B cell (primary cell): ENCODE measurements at regions of chr19 and their contacts with region 1.

Region 1: DNA sequence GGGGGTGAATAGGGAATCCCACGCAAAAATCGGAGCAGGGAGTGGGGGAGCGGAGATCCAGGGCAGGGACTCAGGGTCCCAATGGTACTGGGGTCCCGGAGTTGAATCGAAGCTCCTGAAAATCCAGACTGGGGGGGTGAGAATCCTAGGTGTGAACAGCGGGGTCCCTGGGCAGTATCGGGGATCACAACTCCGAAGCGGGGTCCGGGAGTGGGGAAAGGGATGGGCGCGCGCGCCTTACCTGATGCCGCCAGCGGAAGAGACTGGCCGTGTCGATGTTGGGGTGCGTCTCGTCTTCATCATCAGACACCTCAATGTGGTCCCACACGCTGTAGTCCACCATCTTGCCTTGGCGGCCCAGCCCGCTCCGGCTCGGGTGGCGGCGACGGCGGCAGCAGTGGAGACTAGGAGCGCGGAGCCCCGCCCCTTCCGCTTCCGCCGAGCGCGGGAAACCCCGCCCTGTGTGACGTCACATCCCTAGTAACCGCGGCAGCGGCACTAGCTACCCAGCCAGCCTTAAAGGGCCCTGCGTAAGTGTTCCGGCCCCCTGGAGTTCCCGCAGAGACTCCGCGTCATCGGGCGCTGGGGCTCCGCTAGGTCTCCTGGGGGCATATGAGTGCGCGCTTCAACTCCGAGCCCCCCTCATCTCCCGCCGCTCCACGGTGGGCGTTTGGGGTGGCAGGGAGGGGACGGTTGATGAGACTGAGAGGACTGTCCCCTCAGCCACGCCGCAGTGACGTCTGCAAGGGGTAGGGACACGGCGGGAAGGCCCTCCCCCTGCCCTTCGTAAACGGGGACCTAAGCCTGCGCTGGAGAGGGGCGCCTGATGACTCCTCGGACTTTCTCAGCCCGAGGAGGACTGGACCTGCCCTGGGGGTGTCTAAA is at the start of gene CDC37:
- DNase-seq: peak; percentile 99
- ATAC-seq: peak; percentile 78
- H3K4me3 ChIP-seq: peak within 1 kb of the TSS; percentile 87 to 98 (median 93)
- H3K4me3 Mint-ChIP-seq: peak within 1 kb of the TSS; percentile 94
- H3K27ac ChIP-seq: peak within 1 kb of the TSS; percentile 83 to 93
- H3K27ac Mint-ChIP-seq: peak within 1 kb of the TSS; percentile 91
- H3K4me1 ChIP-seq: peaks cover 49 to 86% of the 10 kb centered on the region in 2 donors
- H3K4me1 Mint-ChIP-seq: peaks cover 68% of the 10 kb centered on the region
- H3K27me3 ChIP-seq: no peaks in the 10 kb centered on the region
- H3K27me3 Mint-ChIP-seq: no peaks in the 10 kb centered on the region
- CTCF ChIP-seq: no peak
- total RNA-seq, gene CDC37: 178 and 193 TPM in 2 replicates

Region 2: DNA sequence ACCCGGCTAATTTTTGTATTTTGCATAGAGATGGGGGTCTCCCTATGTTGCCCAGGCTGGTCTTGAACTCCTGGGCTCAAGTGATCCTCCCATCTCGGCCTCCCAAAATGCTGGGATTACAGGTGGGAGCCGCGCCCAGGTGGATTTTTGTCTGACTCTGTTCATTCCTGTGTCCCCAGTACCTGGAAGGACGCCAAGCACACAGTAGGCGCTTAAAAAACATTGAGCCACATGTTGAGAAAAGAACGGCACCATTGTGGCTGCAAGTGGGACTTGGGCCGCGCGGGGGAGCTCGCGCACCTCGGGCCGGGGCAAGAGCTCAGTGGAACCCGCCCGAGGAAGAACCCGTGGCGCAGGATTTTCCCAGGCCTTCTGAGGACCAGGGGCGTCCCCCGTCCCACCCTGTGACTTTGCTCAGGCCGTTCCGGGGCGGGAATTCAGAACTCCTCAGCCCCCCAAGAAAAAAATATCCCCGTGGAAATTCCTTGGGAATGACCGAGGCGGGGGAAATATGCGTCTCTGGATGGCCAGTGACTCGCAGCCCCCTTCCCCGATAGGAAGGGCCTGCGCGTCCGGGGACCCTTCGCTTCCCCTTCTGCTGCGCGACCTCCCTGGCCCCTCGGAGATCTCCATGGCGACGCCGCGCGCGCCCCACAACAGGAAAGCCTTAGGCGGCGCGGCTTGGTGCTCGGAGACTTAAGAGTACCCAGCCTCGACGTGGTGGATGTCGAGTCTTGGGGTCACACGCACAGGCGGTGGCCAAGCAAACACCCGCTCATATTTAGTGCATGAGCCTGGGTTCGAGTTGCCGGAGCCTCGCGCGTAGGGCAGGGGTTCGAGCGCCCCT is 133.8 kb before region 1 on chr19:
- CTCF ChIA-PET with region 1: interaction called, 21 read pairs
- POLR2A ChIA-PET with region 1: no interaction called
- intact Hi-C with region 1: no loop called
- DNase-seq: peak; percentile 91
- ATAC-seq: peak; percentile 43
- H3K4me3 ChIP-seq: peak overlapping the region; percentile 1 to 72 (median 56)
- H3K4me3 Mint-ChIP-seq: peak overlapping the region; percentile 88
- H3K27ac ChIP-seq: peak overlapping the region; percentile 90 to 97
- H3K27ac Mint-ChIP-seq: peak overlapping the region; percentile 94
- H3K4me1 ChIP-seq: peaks cover 13 to 35% of the 10 kb centered on the region in 2 donors
- H3K4me1 Mint-ChIP-seq: peaks cover 32% of the 10 kb centered on the region
- H3K27me3 ChIP-seq: no peaks in the 10 kb centered on the region
- H3K27me3 Mint-ChIP-seq: no peaks in the 10 kb centered on the region
- CTCF ChIP-seq: peak; percentile 93

Region 3: GRCh38 chr19:10416380-10417257 is 13.2 kb after region 1 on chr19:
- CTCF ChIA-PET with region 1: interaction called, 282 read pairs
- POLR2A ChIA-PET with region 1: interaction called, 8 read pairs
- intact Hi-C with region 1: loop called (anchors 1 kb)
- DNase-seq: peak; percentile 99
- ATAC-seq: peak; percentile 70
- H3K4me3 ChIP-seq: peak overlapping the region; percentile 15 to 69 (median 49)
- H3K4me3 Mint-ChIP-seq: peak overlapping the region; percentile 85
- H3K27ac ChIP-seq: peak overlapping the region in 1 of 2 donors; percentile 28
- H3K27ac Mint-ChIP-seq: peak overlapping the region; percentile 94
- H3K4me1 ChIP-seq: peaks cover 66 to 82% of the 10 kb centered on the region in 2 donors
- H3K4me1 Mint-ChIP-seq: peaks cover 59% of the 10 kb centered on the region
- H3K27me3 ChIP-seq: peaks cover 0 to 46% (median 28%) of the 10 kb centered on the region in 4 experiments
- H3K27me3 Mint-ChIP-seq: peaks cover 29% of the 10 kb centered on the region
- CTCF ChIP-seq: peak; percentile 100

Region 4: GRCh38 chr19:10478903-10479384 is 75.6 kb after region 1 on chr19:
- CTCF ChIA-PET with region 1: interaction called, 11 read pairs
- POLR2A ChIA-PET with region 1: no interaction called
- intact Hi-C with region 1: loop called (anchors 1 kb)
- DNase-seq: peak; percentile 90
- ATAC-seq: peak; percentile 91
- H3K4me3 ChIP-seq: peak overlapping the region in 4 of 5 experiments; percentile 5 to 41 (median 16)
- H3K4me3 Mint-ChIP-seq: peak overlapping the region; percentile 55
- H3K27ac ChIP-seq: no peak overlapping the region
- H3K27ac Mint-ChIP-seq: peak overlapping the region; percentile 37
- H3K4me1 ChIP-seq: peaks cover 9 to 13% of the 10 kb centered on the region in 2 donors
- H3K4me1 Mint-ChIP-seq: peaks cover 16% of the 10 kb centered on the region
- H3K27me3 ChIP-seq: no peaks in the 10 kb centered on the region
- H3K27me3 Mint-ChIP-seq: no peaks in the 10 kb centered on the region
- CTCF ChIP-seq: peak; percentile 80

Region 5: DNA sequence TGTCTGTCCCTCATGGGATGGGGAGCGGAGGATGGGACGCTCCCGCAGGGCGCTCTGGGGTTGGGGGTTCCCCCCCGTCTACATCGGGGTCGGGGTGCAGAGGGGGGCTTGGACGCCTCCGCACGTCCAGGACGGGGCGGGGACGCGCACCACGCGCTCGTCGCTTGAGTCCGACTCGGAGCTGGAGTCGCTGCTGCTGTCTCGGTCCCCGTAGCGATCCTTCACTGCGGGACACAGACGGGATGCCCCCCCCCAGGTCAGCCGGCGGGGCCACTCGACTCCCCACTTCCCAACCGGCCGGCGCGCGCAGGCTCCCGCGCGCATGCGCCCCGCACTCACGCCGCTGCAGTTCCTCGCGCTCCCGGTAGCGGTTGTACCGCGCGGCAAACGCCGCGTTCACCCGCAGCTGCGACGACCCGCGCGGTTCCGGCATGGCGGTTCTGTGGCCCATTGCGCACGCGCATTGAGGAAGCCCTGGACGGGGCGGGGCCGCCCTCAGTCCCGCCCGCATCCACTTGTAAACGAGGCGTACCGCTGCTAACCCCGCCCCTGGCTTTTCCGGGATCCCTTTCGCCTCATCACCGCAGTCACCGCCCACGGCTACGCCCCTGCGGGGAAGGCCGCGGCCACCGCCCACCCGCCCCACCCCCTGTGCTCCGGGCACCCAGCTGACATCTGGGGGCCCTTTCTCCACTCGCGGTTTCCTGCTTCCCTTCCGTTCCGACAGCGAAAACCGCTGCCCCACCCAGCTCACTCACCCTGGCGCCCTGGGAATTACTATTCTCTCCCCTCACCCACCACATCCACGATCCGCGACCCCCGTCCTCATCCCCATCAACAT is 162.4 kb after region 1 on chr19 and contains the start of gene KRI1:
- CTCF ChIA-PET with region 1: interaction called, 4 read pairs
- POLR2A ChIA-PET with region 1: no interaction called
- intact Hi-C with region 1: loop called (anchors 1 kb)
- DNase-seq: peak; percentile 100
- ATAC-seq: peak; percentile 63
- H3K4me3 ChIP-seq: peak within 1 kb of the TSS; percentile 92 to 99 (median 97)
- H3K4me3 Mint-ChIP-seq: peak within 1 kb of the TSS; percentile 95
- H3K27ac ChIP-seq: peak within 1 kb of the TSS; percentile 87 to 88
- H3K27ac Mint-ChIP-seq: peak within 1 kb of the TSS; percentile 96
- H3K4me1 ChIP-seq: peaks cover 28 to 41% of the 10 kb centered on the region in 2 donors
- H3K4me1 Mint-ChIP-seq: peaks cover 44% of the 10 kb centered on the region
- H3K27me3 ChIP-seq: no peaks in the 10 kb centered on the region
- H3K27me3 Mint-ChIP-seq: no peaks in the 10 kb centered on the region
- CTCF ChIP-seq: peak; percentile 51
- total RNA-seq, gene KRI1: 62.8 and 67.9 TPM in 2 replicates